CD14-positive monocyte (primary cell): ENCODE measurements at regions of chr11 and their contacts with region 1.

Region 1: GRCh38 chr11:65919146-65920033 is at the start of gene DRAP1:
- DNase-seq: peak; percentile 95 to 97 (median 96)
- H3K4me3 ChIP-seq: peak within 1 kb of the TSS; percentile 93 to 99 (median 98)
- H3K4me3 Mint-ChIP-seq: peak within 1 kb of the TSS; percentile 89 to 95
- H3K27ac ChIP-seq: peak within 1 kb of the TSS; percentile 61 to 94
- H3K27ac Mint-ChIP-seq: peak within 1 kb of the TSS; percentile 81 to 93 (median 87)
- H3K4me1 ChIP-seq: peaks cover 55 to 61% of the 10 kb centered on the region in 2 donors
- H3K4me1 Mint-ChIP-seq: peaks cover 55% of the 10 kb centered on the region
- H3K27me3 ChIP-seq: no peaks in the 10 kb centered on the region
- H3K27me3 Mint-ChIP-seq: peaks cover 0 to 2% (median 0%) of the 10 kb centered on the region in 3 donors
- CTCF ChIP-seq: no peak
- polyA plus RNA-seq, gene DRAP1: 68.3 to 97.2 (median 72.1) TPM

Region 2: DNA sequence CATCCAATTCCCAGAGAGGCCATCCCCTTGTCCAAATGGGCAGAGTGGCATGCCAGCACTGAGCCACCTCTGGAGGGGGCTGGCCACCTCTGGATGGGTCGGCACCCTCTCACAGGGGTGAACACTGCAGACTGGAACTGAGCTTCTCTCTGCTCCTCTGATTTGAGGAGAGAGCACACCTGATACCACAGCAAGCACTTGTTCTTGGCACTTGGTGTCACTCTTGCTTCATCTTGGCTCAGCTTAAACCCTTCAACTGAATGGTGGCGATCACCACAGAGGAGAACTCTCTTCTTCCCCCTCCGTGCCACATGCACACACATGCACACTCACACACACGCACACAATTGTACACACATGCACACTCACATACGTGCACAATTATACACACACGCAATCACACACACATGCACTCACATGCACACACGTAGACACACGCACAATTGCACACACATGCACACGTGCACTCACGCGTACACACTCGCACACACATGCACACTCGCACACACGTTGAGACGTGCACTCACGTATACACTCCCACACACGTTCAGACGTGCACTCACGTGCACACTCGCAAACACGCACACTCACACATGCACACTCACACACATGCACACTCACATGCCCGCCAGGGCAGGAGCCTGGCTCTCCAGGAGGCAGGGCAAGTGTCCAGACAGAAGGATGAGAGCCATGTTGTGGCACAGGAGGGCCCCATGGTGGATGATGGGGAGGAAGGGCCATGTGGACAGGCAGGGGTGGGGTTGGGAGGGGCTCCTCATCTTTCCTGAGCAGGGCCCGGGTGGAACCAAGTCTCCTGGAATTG is 109.1 kb before region 1 on chr11:
- intact Hi-C with region 1: no loop called
- DNase-seq: no peak
- H3K4me3 ChIP-seq: no peak overlapping the region
- H3K4me3 Mint-ChIP-seq: no peak overlapping the region
- H3K27ac ChIP-seq: no peak overlapping the region
- H3K27ac Mint-ChIP-seq: peak overlapping the region in 1 of 7 donors; percentile 54
- H3K4me1 ChIP-seq: peaks cover 6 to 9% of the 10 kb centered on the region in 2 donors
- H3K4me1 Mint-ChIP-seq: peaks cover 27% of the 10 kb centered on the region
- H3K27me3 ChIP-seq: peaks cover 0 to 4% of the 10 kb centered on the region in 2 donors
- H3K27me3 Mint-ChIP-seq: peaks cover 19 to 31% (median 24%) of the 10 kb centered on the region in 3 donors
- CTCF ChIP-seq: no peak

Region 3: DNA sequence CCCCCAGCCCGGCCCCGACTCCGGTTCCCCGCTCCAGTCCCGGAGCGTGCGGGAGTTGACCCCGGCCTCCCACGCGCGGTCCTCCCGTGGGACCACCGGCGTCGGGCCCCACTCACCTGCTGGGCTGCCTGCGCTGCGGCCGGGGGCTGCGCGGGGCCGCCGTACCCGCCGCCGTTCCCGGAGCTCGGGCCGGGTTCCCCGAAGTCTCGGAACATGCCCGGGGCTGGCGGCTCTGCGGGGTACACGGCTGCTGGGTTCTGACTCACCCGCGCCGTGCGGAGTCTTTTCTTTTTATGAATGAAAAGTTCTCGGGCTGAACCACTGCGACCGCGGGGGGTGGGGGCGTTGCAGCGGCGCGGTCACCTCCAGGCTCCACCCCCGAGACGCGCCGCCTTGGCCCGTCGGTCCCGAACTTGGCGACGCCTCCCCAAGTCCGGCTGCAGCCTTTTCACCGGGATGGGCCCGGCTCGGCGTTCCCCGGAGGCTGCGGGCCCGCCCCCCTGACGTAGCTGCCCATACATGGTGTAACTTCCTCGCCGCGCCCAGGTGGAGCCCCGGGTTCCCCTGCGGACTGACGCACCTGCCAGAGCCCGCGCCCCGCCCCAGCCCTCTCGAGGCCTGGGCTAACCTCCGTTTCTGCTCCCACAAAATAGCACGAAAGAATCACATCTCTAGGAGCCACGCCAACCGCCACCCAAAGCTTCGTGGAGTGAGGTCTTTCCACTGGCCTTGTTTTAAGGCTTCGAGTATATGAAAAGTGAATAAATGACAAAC is 19.1 kb before region 1 on chr11 and contains the start of gene FOSL1:
- intact Hi-C with region 1: loop called (anchors 1 to 2 kb)
- DNase-seq: peak; percentile 89 to 97 (median 96)
- H3K4me3 ChIP-seq: peak within 1 kb of the TSS; percentile 60 to 92 (median 85)
- H3K4me3 Mint-ChIP-seq: peak within 1 kb of the TSS; percentile 85 to 86
- H3K27ac ChIP-seq: peak within 1 kb of the TSS; percentile 36 to 84
- H3K27ac Mint-ChIP-seq: peak within 1 kb of the TSS; percentile 81 to 92 (median 90)
- H3K4me1 ChIP-seq: peaks cover 22 to 28% of the 10 kb centered on the region in 2 donors
- H3K4me1 Mint-ChIP-seq: peaks cover 16% of the 10 kb centered on the region
- H3K27me3 ChIP-seq: no peaks in the 10 kb centered on the region
- H3K27me3 Mint-ChIP-seq: peaks cover 0 to 5% (median 4%) of the 10 kb centered on the region in 3 donors
- CTCF ChIP-seq: no peak
- polyA plus RNA-seq, gene FOSL1: 2.5 to 28.2 (median 2.5) TPM

Region 4: DNA sequence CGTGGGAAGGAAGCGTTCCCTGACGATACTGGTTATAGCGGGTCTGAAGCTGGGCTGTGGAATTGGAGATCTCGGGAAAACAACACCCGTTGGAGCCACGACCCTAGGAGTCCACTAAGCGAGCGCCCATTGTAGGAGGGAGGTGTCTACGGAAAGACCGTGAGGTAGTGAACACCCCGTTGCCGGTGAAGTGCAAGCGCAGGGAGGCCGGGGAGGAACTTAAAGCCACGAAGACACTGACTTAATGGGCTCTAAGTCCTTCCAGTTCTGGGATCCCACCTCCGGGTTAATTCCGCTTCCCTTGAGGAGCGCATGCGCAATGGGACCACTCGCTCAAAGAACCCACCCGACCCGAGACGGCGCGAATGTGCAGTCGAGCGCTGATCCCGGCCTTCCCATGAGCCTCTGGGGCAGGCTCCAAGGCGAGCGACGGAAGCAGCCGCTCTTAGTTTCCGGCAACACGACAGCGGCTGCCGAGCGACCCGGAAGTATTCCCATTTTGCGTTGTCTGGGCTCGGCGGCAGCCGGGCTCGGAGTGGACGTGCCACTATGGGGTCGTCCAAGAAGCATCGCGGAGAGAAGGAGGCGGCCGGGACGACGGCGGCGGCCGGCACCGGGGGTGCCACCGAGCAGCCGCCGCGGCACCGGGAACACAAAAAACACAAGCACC is 42.0 kb after region 1 on chr11 and contains the start of gene SART1:
- intact Hi-C with region 1: loop called (anchors 1 to 5 kb)
- DNase-seq: peak; percentile 94 to 97 (median 97)
- H3K4me3 ChIP-seq: peak within 1 kb of the TSS; percentile 74 to 97 (median 87)
- H3K4me3 Mint-ChIP-seq: peak within 1 kb of the TSS; percentile 91 to 95
- H3K27ac ChIP-seq: peak within 1 kb of the TSS; percentile 80 to 92
- H3K27ac Mint-ChIP-seq: peak within 1 kb of the TSS; percentile 95 to 99 (median 97)
- H3K4me1 ChIP-seq: peaks cover 18 to 31% of the 10 kb centered on the region in 2 donors
- H3K4me1 Mint-ChIP-seq: peaks cover 31% of the 10 kb centered on the region
- H3K27me3 ChIP-seq: no peaks in the 10 kb centered on the region
- H3K27me3 Mint-ChIP-seq: peaks cover 0 to 2% (median 2%) of the 10 kb centered on the region in 3 donors
- CTCF ChIP-seq: no peak
- polyA plus RNA-seq, gene SART1: 8.9 to 52.8 (median 16.1) TPM